K562 (cell line): ENCODE measurements at regions of chr5 and their contacts with region 1.

Region 1: GRCh38 chr5:172454358-172455086 is at the start of gene SH3PXD2B:
- DNase-seq: peak; percentile 59 to 90 (median 80)
- ATAC-seq: peak; percentile 82
- H3K4me3 ChIP-seq: peak within 1 kb of the TSS; percentile 40
- H3K27ac ChIP-seq: no peak within 1 kb of the TSS
- H3K4me1 ChIP-seq: peaks cover 3 to 12% of the 10 kb centered on the region in 2 experiments; a peak in 3 of 5 replicates
- H3K27me3 ChIP-seq: peaks cover 5 to 42% of the 10 kb centered on the region in 2 experiments; a peak in 4 of 5 replicates
- CTCF ChIP-seq: no peak
- EP300 ChIP-seq: no peak
- POLR2A ChIP-seq: no peak
- RAD21 ChIP-seq: no peak
- polyA plus RNA-seq, gene SH3PXD2B: 0.11 to 0.17 TPM

Region 2: DNA sequence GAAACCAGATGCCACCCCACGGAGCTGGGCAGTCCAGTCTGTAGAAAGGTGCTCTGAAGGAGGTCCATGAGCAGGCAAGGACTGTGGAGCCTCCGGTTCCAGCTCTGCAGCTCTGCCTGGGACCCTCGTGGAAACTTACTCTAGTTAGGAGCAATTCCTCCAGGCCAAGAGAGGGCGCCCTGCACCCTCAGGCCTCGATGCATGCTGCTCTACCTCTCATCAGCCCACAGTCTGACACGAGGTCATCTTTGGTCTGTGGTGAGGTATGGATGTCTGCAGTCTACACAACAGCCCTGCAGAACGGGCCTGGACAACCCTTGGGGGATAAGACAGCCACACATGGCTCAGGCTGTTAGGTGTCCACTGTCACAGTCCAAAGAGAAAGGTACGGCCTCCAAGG is 120.3 kb before region 1 on chr5:
- CTCF ChIA-PET with region 1: no interaction called
- POLR2A ChIA-PET with region 1: no interaction called
- in situ Hi-C with region 1: no loop called
- intact Hi-C with region 1: loop called (anchors 2 kb)
- DNase-seq: peak in 1 of 4 experiments; percentile 27
- ATAC-seq: peak; percentile 84
- H3K4me3 ChIP-seq: no peak overlapping the region
- H3K27ac ChIP-seq: no peak overlapping the region
- H3K4me1 ChIP-seq: no peaks in the 10 kb centered on the region; a peak in 1 of 5 replicates
- H3K27me3 ChIP-seq: peaks cover 23 to 78% of the 10 kb centered on the region in 2 experiments; a peak in 3 of 5 replicates
- CTCF ChIP-seq: peak in 2 of 3 experiments; percentile 28 to 34; a peak in 2 of 6 replicates
- EP300 ChIP-seq: no peak
- POLR2A ChIP-seq: no peak
- RAD21 ChIP-seq: peak in 1 of 2 experiments; percentile 43; a peak in 1 of 4 replicates